ENCODE measurements at regions of chr2 and their contacts with region 1.

Region 1: DNA sequence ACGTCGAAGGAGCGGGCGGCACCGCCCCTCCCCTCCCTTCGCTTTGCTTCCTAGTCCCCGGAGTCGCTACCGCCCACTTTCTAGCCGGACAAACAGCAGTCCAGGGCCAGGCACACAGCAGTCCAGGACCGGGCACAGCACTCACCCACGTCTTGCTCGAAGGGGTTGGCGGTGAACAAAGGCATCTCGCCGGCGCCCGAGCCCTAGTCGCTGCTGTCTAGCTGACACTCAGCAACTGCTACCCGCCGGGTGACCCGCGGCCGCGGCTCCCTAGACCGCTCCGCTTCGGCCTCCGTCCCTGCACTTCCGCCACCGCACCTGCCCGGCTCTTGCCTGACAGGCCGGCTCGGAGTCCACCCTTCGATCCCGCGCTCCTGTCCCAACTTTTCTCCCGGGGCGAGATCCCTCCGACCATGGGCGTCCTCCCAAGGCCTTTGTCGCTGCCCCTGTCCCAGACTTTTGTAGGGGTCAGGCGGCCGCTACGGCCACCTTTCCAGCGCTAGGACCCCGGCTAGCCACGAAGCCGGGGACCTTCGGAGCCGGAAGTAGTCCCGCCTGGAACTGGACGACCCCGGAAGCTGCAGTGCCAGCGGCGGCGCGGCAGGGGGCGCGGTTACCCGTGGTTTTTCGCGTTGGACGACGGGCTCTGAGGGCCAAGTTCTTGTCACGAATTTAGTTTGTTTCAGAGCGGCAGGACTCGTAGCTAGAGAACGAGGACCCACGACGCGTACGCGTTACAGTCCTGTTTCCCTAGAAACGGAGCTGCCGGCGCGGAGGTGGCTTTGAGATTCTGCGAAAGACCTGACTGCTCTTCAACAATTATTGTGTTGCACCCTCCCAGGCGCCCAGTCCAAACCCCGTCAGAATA is at the start of gene STAM2:
- DNase-seq: peak; percentile 47
- H3K4me3 ChIP-seq: peak within 1 kb of the TSS; percentile 98
- CTCF ChIP-seq: peak; percentile 99

Region 2: GRCh38 chr2:152036611-152037469 is 138.9 kb before region 1 on chr2:
- CTCF ChIA-PET with region 1: interaction called, 99 read pairs
- POLR2A ChIA-PET with region 1: no interaction called
- DNase-seq: peak; percentile 16
- H3K4me3 ChIP-seq: no peak overlapping the region
- CTCF ChIP-seq: peak; percentile 77

Region 3: DNA sequence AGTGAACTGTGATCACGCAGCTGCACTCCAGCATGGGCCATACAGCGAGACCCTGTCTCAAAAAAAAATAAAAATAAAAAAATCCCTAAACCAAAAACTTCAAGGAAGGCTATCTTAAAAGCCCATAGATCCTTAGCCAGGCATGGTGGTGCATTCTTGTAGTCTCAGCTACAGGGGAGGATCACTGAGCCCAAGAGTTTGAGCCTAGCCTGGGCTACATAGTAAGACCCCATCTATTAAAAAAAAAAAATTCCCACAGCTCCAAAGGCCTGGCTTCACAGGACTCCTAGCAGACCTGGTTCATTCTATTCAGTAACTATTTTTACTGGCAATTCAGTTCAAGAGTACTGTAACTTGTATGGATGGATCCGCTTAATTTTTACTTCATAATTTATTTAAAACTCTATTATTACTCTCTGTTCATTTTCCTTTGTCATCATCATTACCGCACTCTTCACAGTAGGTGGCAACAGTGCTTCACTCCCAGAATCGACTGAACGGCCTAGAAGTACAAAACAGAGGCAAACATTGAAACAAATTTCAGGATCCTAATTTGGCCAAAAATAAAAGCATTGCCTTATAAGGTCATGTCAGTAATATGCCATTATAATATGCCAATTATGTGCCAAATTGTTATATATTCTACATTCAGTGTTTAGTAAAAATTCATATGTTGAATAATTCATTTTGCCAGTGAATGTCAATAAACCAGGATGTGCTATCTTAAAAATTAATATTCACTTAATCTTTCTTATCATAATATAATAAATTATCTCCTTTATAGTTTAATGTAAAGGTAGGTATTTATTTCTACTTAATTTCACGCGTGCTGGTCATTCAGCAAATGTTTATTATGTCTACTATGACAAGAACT is 14.2 kb after region 1 on chr2:
- CTCF ChIA-PET with region 1: interaction called, 14 read pairs
- POLR2A ChIA-PET with region 1: no interaction called
- DNase-seq: no peak
- H3K4me3 ChIP-seq: no peak overlapping the region
- CTCF ChIP-seq: peak; percentile 67

Region 4: DNA sequence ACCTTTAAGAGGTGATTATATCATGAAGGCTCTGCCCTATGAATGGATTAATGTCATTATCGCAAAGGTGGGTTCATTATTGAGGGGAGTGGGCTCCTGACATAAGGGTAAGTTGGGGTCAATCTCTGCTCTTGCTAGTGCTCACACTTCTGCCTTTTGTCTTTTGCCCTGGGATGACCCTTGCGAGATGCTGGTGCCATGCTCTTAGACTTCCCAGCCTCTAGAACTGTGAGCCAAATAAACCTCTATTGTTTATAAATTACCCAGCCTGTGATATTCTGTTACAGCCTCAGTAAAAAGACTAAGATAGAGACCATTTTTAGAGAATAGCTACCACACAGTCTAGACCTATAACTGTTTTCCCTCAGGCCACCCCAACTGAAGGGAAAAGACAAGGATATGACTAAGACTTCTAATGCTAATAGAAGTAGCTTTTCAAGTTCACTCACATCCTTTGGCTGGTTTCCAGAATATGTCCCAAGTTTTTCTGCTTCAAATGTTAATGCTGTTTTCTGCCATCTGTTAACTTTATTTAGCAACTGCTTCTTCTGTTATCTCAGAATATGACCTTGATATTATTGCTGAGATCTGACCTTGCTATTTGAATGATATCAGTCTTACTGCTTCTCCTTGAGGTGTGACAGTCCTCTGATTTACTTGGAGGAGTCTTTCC is 65.0 kb after region 1 on chr2:
- CTCF ChIA-PET with region 1: no interaction called
- POLR2A ChIA-PET with region 1: no interaction called
- DNase-seq: no peak
- H3K4me3 ChIP-seq: no peak overlapping the region
- CTCF ChIP-seq: no peak

Region 5: GRCh38 chr2:152648336-152648735 is 472.6 kb after region 1 on chr2:
- CTCF ChIA-PET with region 1: interaction called, 30 read pairs
- POLR2A ChIA-PET with region 1: interaction called, 3 read pairs
- DNase-seq: no peak
- H3K4me3 ChIP-seq: no peak overlapping the region
- CTCF ChIP-seq: no peak

Measured in AG04449 (cell line).